ENCODE measurements at regions of chr11 and their contacts with region 1.

Region 1: GRCh38 chr11:44943118-44943517 is 7.6 kb downstream of the TP53I11 start:
- DNase-seq: peak; percentile 74
- ATAC-seq: peak; percentile 94
- H3K4me3 Mint-ChIP-seq: peak overlapping the region; percentile 76
- H3K27ac Mint-ChIP-seq: peak overlapping the region; percentile 80
- H3K4me1 Mint-ChIP-seq: peaks cover 92% of the 10 kb centered on the region
- H3K27me3 Mint-ChIP-seq: no peaks in the 10 kb centered on the region
- CTCF ChIP-seq: no peak

Region 2: GRCh38 chr11:44957776-44958564 is 14.9 kb after region 1 on chr11:
- CTCF ChIA-PET with region 1: no interaction called
- POLR2A ChIA-PET with region 1: no interaction called
- intact Hi-C with region 1: no loop called
- DNase-seq: no peak
- ATAC-seq: no peak
- H3K4me3 Mint-ChIP-seq: no peak overlapping the region
- H3K27ac Mint-ChIP-seq: no peak overlapping the region
- H3K4me1 Mint-ChIP-seq: peaks cover 11% of the 10 kb centered on the region
- H3K27me3 Mint-ChIP-seq: no peaks in the 10 kb centered on the region
- CTCF ChIP-seq: no peak

Region 3: DNA sequence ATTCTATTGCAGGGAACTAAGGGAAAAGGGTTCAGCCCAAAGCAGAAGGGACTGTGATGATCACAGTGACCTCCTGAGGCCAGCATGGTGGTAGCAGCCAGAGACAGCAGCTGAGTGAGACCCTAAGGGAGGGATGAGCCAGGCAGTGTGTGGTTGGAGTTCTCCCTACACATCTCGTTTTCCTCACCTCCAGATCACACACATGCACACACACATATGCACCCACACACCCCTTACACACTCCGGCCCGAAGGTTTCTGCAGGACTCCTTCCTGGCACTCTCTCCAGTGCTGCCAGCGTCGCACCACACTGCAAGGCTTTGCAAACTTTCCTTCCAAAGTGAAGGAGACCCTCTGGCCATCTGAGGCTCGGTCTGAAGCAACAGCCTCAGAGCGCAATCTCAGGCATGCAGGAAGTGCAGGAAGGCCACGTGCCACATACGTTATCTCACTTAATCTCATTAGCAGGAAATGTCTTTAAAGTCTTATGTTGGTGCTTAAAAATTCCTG is 34.4 kb after region 1 on chr11:
- CTCF ChIA-PET with region 1: interaction called, 4 read pairs
- POLR2A ChIA-PET with region 1: interaction called, 3 read pairs
- intact Hi-C with region 1: loop called (anchors 5 kb)
- DNase-seq: no peak
- ATAC-seq: no peak
- H3K4me3 Mint-ChIP-seq: peak overlapping the region; percentile 13
- H3K27ac Mint-ChIP-seq: no peak overlapping the region
- H3K4me1 Mint-ChIP-seq: peaks cover 21% of the 10 kb centered on the region
- H3K27me3 Mint-ChIP-seq: no peaks in the 10 kb centered on the region
- CTCF ChIP-seq: no peak

Region 4: GRCh38 chr11:45079943-45080719 is 137.0 kb after region 1 on chr11:
- CTCF ChIA-PET with region 1: interaction called, 3 read pairs
- POLR2A ChIA-PET with region 1: interaction called, 10 read pairs
- intact Hi-C with region 1: no loop called
- DNase-seq: peak; percentile 45
- ATAC-seq: peak; percentile 71
- H3K4me3 Mint-ChIP-seq: peak overlapping the region; percentile 59
- H3K27ac Mint-ChIP-seq: peak overlapping the region; percentile 84
- H3K4me1 Mint-ChIP-seq: peaks cover 71% of the 10 kb centered on the region
- H3K27me3 Mint-ChIP-seq: no peaks in the 10 kb centered on the region
- CTCF ChIP-seq: no peak

Measured in activated B cell treated with CpG ODN at 0.5 μM for 24 hours (primary cell).